Right lobe of liver (tissue), 6 donors: ENCODE measurements at regions of chr15 and their contacts with region 1.

Region 1: GRCh38 chr15:40421246-40422157 is 15.9 kb downstream of the IVD start:
- DNase-seq: peak; percentile 85 to 88 (median 85)
- ATAC-seq: peak; percentile 90 to 94 (median 92)
- H3K4me3 ChIP-seq: no peak overlapping the region
- H3K27ac ChIP-seq: no peak overlapping the region
- H3K4me1 ChIP-seq: peaks cover 0 to 22% (median 8%) of the 10 kb centered on the region in 4 donors
- H3K27me3 ChIP-seq: no peaks in the 10 kb centered on the region
- CTCF ChIP-seq: peak; percentile 85 to 98 (median 94)
- POLR2A ChIP-seq: peak; percentile 28

Region 2: GRCh38 chr15:40344631-40345120 is 76.8 kb before region 1 on chr15:
- intact Hi-C with region 1: loop called in 1 of 2 experiments (anchors 10 kb)
- DNase-seq: peak; percentile 58 to 76 (median 67)
- ATAC-seq: peak; percentile 40 to 55 (median 48)
- H3K4me3 ChIP-seq: no peak overlapping the region
- H3K27ac ChIP-seq: no peak overlapping the region
- H3K4me1 ChIP-seq: peaks cover 0 to 18% (median 8%) of the 10 kb centered on the region in 4 donors
- H3K27me3 ChIP-seq: no peaks in the 10 kb centered on the region
- CTCF ChIP-seq: peak; percentile 72 to 83 (median 78)
- POLR2A ChIP-seq: no peak

Region 3: GRCh38 chr15:40454904-40455391 is 33.4 kb after region 1 on chr15:
- intact Hi-C with region 1: no loop called
- DNase-seq: no peak
- ATAC-seq: no peak
- H3K4me3 ChIP-seq: no peak overlapping the region
- H3K27ac ChIP-seq: no peak overlapping the region
- H3K4me1 ChIP-seq: peaks cover 0 to 4% (median 0%) of the 10 kb centered on the region in 4 donors
- H3K27me3 ChIP-seq: no peaks in the 10 kb centered on the region
- CTCF ChIP-seq: no peak
- POLR2A ChIP-seq: no peak